ENCODE measurements at regions of chr20 and their contacts with region 1.

Region 1: GRCh38 chr20:52704553-52704952 is 267.6 kb upstream of the TSHZ2 start:
- DNase-seq: no peak
- H3K4me3 ChIP-seq: no peak overlapping the region
- H3K27ac ChIP-seq: no peak overlapping the region
- H3K4me1 ChIP-seq: no peaks in the 10 kb centered on the region
- CTCF ChIP-seq: no peak

Region 2: GRCh38 chr20:52675375-52675774 is 29.2 kb before region 1 on chr20:
- CTCF ChIA-PET with region 1: no interaction called
- POLR2A ChIA-PET with region 1: no interaction called
- intact Hi-C with region 1: loop called (anchors 1 kb)
- DNase-seq: no peak
- H3K4me3 ChIP-seq: no peak overlapping the region
- H3K27ac ChIP-seq: no peak overlapping the region
- H3K4me1 ChIP-seq: no peaks in the 10 kb centered on the region
- CTCF ChIP-seq: no peak

Region 3: GRCh38 chr20:52828199-52828598 is 123.6 kb after region 1 on chr20:
- CTCF ChIA-PET with region 1: no interaction called
- POLR2A ChIA-PET with region 1: no interaction called
- intact Hi-C with region 1: no loop called
- DNase-seq: no peak
- H3K4me3 ChIP-seq: no peak overlapping the region
- H3K27ac ChIP-seq: no peak overlapping the region
- H3K4me1 ChIP-seq: no peaks in the 10 kb centered on the region
- CTCF ChIP-seq: no peak

Measured in OCI-LY7 (cell line).